AG04450 (cell line): ENCODE measurements at regions of chr10 and their contacts with region 1.

Region 1: GRCh38 chr10:45183174-45183573 is 132.2 kb downstream of the OR13A1 start:
- DNase-seq: no peak
- H3K4me3 ChIP-seq: no peak overlapping the region
- H3K27ac ChIP-seq: no peak overlapping the region
- H3K27me3 ChIP-seq: no peaks in the 10 kb centered on the region
- CTCF ChIP-seq: no peak

Region 2: GRCh38 chr10:45006276-45007030 is 176.7 kb before region 1 on chr10:
- CTCF ChIA-PET with region 1: interaction called, 12 read pairs
- POLR2A ChIA-PET with region 1: no interaction called
- DNase-seq: no peak
- H3K4me3 ChIP-seq: no peak overlapping the region
- H3K27ac ChIP-seq: no peak overlapping the region
- H3K27me3 ChIP-seq: no peaks in the 10 kb centered on the region
- CTCF ChIP-seq: no peak

Region 3: DNA sequence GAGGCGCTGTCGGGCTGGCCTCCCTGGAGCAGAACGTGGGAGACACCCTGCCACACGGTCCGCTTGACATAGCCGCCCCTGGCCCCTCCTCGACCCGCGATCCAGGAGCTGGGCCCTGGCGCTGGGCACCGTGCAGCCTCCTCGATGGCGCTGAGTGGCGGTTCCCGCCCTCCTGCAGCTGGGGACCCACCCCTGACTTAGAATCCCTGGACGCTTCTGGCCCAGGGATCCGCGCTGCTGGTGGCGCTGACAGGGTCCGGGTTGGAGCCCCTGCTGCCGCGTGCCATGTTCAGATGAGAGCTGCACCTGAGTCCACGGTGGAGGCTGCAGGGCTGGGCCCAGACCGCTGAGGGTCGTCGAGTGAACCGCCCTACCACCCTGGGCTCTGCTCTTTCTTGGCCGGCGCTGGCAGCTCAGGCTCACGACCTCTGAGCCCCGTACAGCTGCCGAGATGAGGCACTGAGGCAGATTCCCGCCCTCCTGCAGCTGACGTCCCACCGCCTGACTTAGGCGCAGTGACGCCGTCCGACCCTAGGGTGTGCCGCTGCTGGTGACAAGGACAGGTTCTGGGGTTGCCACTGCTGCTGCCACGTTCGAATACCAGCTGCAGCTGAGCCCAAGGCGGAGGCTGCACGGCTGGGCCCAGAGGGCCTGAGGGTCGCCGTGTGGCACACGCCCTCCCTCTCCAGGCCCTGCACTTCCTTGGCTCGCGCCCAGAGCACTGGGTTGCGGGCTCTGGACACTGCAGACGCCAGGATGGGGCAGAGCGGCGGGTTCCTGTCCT is 15.6 kb after region 1 on chr10:
- CTCF ChIA-PET with region 1: no interaction called
- POLR2A ChIA-PET with region 1: no interaction called
- DNase-seq: no peak
- H3K4me3 ChIP-seq: no peak overlapping the region
- H3K27ac ChIP-seq: no peak overlapping the region
- H3K27me3 ChIP-seq: peaks cover 4% of the 10 kb centered on the region
- CTCF ChIP-seq: no peak

Region 4: DNA sequence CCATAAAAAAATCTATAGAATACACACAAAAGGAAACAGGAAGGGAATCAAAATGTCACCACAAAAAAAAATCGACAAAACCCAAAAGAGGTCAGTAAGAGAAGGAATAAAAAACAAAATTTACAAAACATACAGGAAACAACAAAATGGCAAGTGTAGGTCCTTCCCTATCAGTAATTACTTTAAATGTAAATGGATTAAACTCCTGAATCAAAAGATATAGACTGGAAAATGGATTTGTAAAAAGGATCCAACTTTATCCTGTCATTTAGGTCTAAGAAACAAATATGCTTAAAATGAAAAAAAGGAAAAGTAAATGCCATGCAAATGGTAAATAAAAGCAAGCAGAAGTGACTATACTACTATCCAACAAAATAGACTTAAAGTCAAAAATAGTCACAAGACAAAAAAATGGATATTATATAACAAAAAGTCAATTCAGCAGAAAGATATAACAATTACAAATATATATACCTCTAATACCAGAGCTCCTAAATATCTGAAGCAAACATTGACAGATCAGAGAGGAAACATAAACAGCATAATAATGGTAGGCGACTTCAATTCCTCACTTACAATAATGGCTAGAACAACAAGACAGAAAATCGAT is 130.2 kb after region 1 on chr10:
- CTCF ChIA-PET with region 1: no interaction called
- POLR2A ChIA-PET with region 1: no interaction called
- DNase-seq: no peak
- H3K4me3 ChIP-seq: no peak overlapping the region
- H3K27ac ChIP-seq: no peak overlapping the region
- H3K27me3 ChIP-seq: no peaks in the 10 kb centered on the region
- CTCF ChIP-seq: no peak